Common myeloid progenitor, CD34-positive (primary cell): ENCODE measurements at regions of chr9 and their contacts with region 1.

Region 1: DNA sequence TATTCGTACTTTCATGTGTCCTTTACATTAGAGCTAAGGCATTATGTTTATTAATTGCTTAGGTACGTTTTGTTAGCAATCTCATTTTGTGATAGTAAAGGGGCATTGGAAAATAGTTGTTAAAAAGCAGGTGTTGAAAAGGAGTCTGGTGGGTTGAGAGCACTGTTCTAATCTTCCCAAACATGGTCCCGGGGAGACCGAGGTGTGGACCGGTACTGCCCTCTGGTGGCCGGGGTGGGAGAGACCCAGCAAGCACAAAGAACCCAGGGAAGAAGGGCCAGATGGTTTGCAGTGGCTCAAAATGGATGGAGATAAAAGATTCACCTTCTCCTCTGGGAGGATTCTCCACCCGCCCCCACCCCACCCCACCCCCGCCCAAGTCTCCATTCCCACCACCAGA is 26.1 kb downstream of the IDNK start:
- DNase-seq: peak; percentile 56 to 80 (median 74)
- H3K4me3 ChIP-seq: no peak overlapping the region
- H3K27ac ChIP-seq: no peak overlapping the region
- H3K4me1 ChIP-seq: peaks cover 0 to 5% (median 0%) of the 10 kb centered on the region in 4 experiments
- H3K27me3 ChIP-seq: no peaks in the 10 kb centered on the region

Region 2: DNA sequence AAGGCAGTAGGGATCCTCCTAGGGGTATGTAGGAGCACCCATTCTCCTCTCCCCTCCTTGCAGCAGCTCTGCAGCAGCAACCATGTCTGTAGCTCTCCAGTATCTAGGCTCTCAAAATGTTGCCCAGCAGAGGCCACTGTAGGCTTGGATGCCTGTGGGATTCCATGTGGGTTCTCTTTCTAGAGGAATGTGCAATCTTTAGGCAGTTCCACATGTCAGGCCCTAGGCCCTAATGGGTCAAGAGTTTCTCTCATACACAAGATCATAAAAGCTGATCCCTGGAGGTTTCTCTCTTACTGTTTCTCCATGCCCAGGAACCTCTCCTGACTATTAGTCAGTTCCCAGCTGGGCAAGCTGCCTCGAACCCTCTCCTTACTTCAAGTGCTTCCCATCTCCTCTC is 326.6 kb before region 1 on chr9:
- CTCF ChIA-PET with region 1: no interaction called
- POLR2A ChIA-PET with region 1: no interaction called
- DNase-seq: no peak
- H3K4me3 ChIP-seq: no peak overlapping the region
- H3K27ac ChIP-seq: no peak overlapping the region
- H3K4me1 ChIP-seq: no peaks in the 10 kb centered on the region
- H3K27me3 ChIP-seq: no peaks in the 10 kb centered on the region

Region 3: GRCh38 chr9:83622939-83623678 is 26.0 kb before region 1 on chr9 and contains the start of gene IDNK:
- CTCF ChIA-PET with region 1: interaction called, 121 read pairs
- POLR2A ChIA-PET with region 1: interaction called, 5 read pairs
- DNase-seq: peak; percentile 66 to 84 (median 71)
- H3K4me3 ChIP-seq: peak within 1 kb of the TSS; percentile 68 to 95 (median 81)
- H3K27ac ChIP-seq: peak within 1 kb of the TSS; percentile 86 to 92
- H3K4me1 ChIP-seq: peaks cover 4 to 40% (median 28%) of the 10 kb centered on the region in 4 experiments
- H3K27me3 ChIP-seq: no peaks in the 10 kb centered on the region

Region 4: DNA sequence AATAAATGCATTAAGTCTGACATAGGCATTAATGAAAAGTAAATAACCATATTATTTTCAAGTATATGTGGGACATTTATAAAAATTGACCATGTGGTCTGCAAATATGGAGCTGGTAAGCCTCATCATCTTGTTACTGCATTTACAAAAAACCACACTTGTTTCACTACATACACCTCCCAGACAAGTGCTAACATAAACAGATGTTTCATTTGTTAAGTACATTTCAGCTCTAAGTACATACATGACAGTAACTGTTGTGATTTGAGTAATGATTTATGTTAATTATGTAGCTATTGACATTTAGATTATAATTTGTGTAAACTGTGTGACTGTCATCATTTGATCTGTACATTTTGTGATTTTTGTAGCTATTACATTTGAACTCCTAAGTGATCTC is 12.3 kb before region 1 on chr9:
- CTCF ChIA-PET with region 1: interaction called, 121 read pairs
- POLR2A ChIA-PET with region 1: no interaction called
- DNase-seq: no peak
- H3K4me3 ChIP-seq: no peak overlapping the region
- H3K27ac ChIP-seq: no peak overlapping the region
- H3K4me1 ChIP-seq: no peaks in the 10 kb centered on the region
- H3K27me3 ChIP-seq: no peaks in the 10 kb centered on the region

Region 5: DNA sequence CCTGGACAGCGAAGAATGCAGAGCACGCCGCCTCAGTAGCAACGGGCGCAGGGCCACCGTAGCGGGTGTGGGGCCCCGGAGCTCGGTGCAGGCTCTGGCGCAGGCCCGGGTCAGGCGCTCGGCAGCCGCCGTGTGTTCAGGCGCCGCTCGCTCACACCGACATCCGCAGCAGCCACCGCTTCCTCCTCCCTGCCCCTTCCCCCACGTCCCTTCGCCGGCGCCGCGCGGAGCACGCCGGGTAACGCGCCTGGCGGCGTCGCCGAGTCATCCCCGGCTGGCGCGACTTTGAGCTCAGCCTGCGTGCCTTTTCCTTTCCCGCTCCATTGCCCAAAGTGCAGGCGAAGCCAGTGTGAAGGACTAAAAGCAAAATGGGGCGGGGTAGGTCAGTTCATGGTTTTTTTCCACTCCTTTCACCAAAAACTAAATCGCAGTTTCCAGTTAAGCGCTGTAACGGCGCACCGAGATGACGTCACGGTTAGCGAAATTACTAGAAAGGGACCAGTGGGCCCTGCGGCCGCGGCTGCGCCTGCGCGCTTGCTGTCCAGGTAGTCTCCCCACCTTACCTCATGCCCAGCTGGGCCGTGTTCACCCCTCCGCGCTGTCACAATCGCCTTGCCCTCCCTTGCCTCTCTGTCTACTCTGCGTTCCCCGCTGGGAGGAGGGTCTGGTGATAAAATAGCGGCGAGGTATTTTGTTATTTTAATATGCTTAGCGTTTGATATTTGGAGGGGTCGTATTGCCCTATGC is 58.9 kb after region 1 on chr9 and contains the start of gene UBQLN1:
- CTCF ChIA-PET with region 1: interaction called, 16 read pairs
- POLR2A ChIA-PET with region 1: interaction called, 3 read pairs
- DNase-seq: peak; percentile 95 to 97 (median 96)
- H3K4me3 ChIP-seq: peak within 1 kb of the TSS; percentile 85 to 98 (median 92)
- H3K27ac ChIP-seq: peak within 1 kb of the TSS; percentile 97 to 99
- H3K4me1 ChIP-seq: peaks cover 10 to 24% (median 18%) of the 10 kb centered on the region in 4 experiments
- H3K27me3 ChIP-seq: no peaks in the 10 kb centered on the region